Right lobe of liver (tissue), 6 donors: ENCODE measurements at regions of chr16 and their contacts with region 1.

Region 1: DNA sequence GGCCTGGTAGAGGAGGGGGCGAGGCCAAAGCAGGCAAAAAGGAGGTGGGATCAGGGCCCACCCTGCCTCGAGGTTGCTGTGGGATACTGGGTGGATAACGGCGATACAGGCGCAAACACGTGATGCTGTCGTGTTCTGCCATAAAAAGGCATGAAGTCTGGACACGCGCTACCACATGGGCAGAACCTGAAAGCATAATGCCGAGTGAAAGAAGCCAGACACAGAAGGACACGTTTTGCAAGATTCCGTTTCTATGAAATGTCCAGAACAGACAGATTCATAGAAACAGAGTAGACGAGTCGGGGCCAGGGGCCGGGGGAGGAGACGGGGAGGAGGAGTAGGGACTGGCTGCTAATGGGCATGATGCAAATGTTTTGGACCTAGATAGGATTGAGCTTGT is 43.5 kb downstream of the ZDHHC7 start:
- DNase-seq: no peak
- ATAC-seq: no peak
- H3K4me3 ChIP-seq: no peak overlapping the region
- H3K27ac ChIP-seq: no peak overlapping the region
- H3K4me1 ChIP-seq: peaks cover 0 to 11% (median 4%) of the 10 kb centered on the region in 4 donors
- H3K27me3 ChIP-seq: no peaks in the 10 kb centered on the region
- CTCF ChIP-seq: no peak
- POLR2A ChIP-seq: no peak

Region 2: GRCh38 chr16:84754353-84754856 is 213.4 kb before region 1 on chr16:
- intact Hi-C with region 1: loop called (anchors 10 kb)
- DNase-seq: peak in 1 of 3 donors; percentile 73
- ATAC-seq: peak; percentile 93 to 95 (median 94)
- H3K4me3 ChIP-seq: no peak overlapping the region
- H3K27ac ChIP-seq: peak overlapping the region; percentile 45 to 89 (median 68)
- H3K4me1 ChIP-seq: peaks cover 0 to 8% (median 5%) of the 10 kb centered on the region in 4 donors
- H3K27me3 ChIP-seq: no peaks in the 10 kb centered on the region
- CTCF ChIP-seq: peak; percentile 78 to 96 (median 88)
- POLR2A ChIP-seq: no peak

Region 3: GRCh38 chr16:85086347-85087291 is 118.8 kb after region 1 on chr16:
- intact Hi-C with region 1: loop called in 1 of 2 experiments (anchors 10 kb)
- DNase-seq: peak in 2 of 3 donors; percentile 59 to 66
- ATAC-seq: peak; percentile 38 to 72 (median 66)
- H3K4me3 ChIP-seq: no peak overlapping the region
- H3K27ac ChIP-seq: no peak overlapping the region
- H3K4me1 ChIP-seq: peaks cover 0 to 10% (median 5%) of the 10 kb centered on the region in 4 donors
- H3K27me3 ChIP-seq: no peaks in the 10 kb centered on the region
- CTCF ChIP-seq: peak; percentile 49 to 64 (median 62)
- POLR2A ChIP-seq: no peak